ENCODE measurements at regions of chr2 and their contacts with region 1.

Region 1: DNA sequence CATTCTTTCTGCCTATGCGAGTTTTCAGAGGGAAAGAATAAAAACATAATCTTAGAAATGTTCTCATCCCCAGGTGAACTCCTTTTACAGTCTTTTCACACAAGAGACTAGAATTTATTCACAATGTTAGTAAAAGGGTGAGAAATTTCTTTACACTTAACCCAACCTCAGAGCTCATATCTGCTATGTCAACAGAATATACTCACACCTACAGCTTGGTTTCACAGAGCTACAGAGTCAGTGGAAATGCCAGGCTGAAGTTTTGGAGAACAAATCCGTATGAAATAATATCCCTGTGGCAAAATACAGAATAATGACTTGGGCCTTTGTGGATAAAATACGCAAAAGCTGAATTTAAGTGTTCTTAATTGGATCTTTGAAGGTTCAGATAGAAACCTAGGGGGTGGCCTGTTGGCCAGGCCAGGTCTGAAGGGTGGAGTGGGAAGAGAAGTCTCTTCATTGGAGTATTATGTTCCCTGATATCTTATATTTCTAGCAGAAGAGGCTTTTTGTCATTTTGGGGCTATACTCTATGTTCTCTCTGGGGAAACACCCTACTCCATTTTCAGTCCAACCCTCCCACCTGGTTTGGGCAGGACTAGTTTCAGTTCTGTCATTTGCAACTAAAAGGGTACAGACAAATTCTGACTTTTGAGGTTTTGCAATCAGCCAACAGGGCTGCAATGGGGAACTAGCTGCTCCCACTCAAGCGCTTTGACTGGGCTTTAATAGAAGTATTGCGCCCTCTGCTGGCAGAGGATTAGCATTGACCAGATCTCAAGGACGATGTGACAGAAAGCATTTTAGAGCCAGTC is 25.7 kb downstream of the FBXO48 start:
- DNase-seq: peak; percentile 78
- H3K4me3 Mint-ChIP-seq: peak overlapping the region; percentile 28
- H3K27ac Mint-ChIP-seq: peak overlapping the region; percentile 65
- H3K4me1 Mint-ChIP-seq: peaks cover 16% of the 10 kb centered on the region
- H3K27me3 Mint-ChIP-seq: peaks cover 15% of the 10 kb centered on the region

Region 2: DNA sequence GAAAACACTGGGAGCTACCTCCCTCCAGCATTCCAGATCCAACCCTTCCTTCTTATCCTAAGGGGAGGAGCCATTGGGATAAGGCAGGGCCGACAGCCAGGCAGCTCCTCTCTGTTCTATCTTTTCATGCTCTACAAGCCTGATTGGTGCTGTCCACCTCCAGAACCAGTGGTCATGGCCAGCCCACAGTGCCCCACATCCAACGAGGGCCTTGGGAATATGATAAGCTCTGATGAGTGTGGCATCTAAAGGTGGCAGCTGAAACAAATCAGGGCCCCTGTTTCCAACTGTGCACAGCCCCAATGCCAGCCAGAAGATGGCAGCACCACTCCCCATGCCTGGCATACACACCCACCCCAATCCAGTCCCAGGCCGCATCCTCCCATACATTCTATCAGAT is 707.9 kb before region 1 on chr2:
- intact Hi-C with region 1: no loop called
- DNase-seq: no peak
- H3K4me3 Mint-ChIP-seq: no peak overlapping the region
- H3K27ac Mint-ChIP-seq: no peak overlapping the region
- H3K4me1 Mint-ChIP-seq: no peaks in the 10 kb centered on the region
- H3K27me3 Mint-ChIP-seq: no peaks in the 10 kb centered on the region

Region 3: GRCh38 chr2:68157402-68158133 is 283.8 kb before region 1 on chr2 and contains the start of gene PNO1:
- intact Hi-C with region 1: loop called (anchors 10 kb)
- DNase-seq: peak; percentile 95
- H3K4me3 Mint-ChIP-seq: peak within 1 kb of the TSS; percentile 95
- H3K27ac Mint-ChIP-seq: peak within 1 kb of the TSS; percentile 99
- H3K4me1 Mint-ChIP-seq: peaks cover 40% of the 10 kb centered on the region
- H3K27me3 Mint-ChIP-seq: no peaks in the 10 kb centered on the region
- total RNA-seq, gene PNO1: 24.5 and 24.7 TPM in 2 replicates

Region 4: DNA sequence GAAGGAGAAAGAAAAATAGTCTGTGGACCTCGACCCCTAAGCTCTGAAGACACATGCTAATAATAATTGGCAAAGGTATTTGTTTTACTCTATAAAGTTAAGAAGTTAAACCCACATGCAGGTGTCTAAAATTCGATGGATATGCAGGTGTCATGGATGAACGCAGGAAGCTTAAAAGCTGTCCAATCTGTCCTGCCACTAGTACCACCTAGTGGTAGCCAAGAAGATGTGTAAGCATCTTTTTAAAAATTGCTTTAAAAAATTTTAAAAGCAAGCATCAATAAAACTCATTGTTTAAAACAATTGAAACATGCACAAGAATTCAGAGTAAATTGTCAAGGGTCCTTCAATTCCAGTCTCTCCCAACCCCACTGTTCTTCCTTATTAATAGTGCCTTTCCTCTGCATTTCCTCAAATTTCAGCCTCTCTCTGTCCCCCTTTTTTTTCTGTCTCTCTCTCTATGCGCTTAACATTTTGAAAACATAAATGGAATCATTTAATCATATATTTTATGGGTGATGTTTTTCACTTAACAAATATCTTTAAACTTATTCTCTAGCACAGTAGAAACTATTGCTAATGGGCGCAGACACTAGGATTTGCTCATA is 158.5 kb before region 1 on chr2:
- intact Hi-C with region 1: loop called (anchors 10 kb)
- DNase-seq: no peak
- H3K4me3 Mint-ChIP-seq: no peak overlapping the region
- H3K27ac Mint-ChIP-seq: no peak overlapping the region
- H3K4me1 Mint-ChIP-seq: peaks cover 2% of the 10 kb centered on the region
- H3K27me3 Mint-ChIP-seq: peaks cover 60% of the 10 kb centered on the region

Region 5: DNA sequence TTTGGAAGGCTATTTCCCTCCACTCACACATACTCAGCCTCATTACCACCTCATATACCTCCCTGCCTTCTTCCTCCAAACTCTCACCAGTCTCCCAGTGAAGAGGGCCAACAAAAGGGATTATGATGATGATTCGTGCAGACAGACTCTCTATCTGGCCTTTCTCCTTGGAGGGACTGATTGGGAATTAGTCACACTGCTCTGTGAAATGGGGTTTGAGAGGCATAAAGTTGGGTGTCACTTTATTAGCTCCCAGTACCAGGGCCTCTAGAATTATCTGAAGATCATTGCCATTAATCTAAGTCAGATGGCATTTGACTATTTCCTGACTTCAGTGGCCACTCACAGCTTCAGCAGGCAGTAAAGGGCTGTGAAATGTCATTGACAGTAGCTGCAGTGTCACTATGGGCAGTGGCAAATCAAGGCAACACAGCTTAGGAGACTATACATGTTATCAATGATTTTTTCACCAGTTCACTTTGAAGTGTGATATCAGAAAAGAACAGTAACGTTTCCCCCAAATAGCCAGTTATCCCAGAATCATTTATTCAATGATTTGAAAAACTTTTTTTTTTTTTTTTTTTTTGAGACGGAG is 139.0 kb before region 1 on chr2:
- intact Hi-C with region 1: no loop called
- DNase-seq: no peak
- H3K4me3 Mint-ChIP-seq: no peak overlapping the region
- H3K27ac Mint-ChIP-seq: no peak overlapping the region
- H3K4me1 Mint-ChIP-seq: no peaks in the 10 kb centered on the region
- H3K27me3 Mint-ChIP-seq: peaks cover 14% of the 10 kb centered on the region

Region 6: GRCh38 chr2:68385220-68385906 is 56.0 kb before region 1 on chr2:
- intact Hi-C with region 1: loop called (anchors 1 kb)
- DNase-seq: no peak
- H3K4me3 Mint-ChIP-seq: no peak overlapping the region
- H3K27ac Mint-ChIP-seq: no peak overlapping the region
- H3K4me1 Mint-ChIP-seq: peaks cover 36% of the 10 kb centered on the region
- H3K27me3 Mint-ChIP-seq: peaks cover 18% of the 10 kb centered on the region